ENCODE measurements at regions of chr6 and their contacts with region 1.

Region 1: GRCh38 chr6:117265410-117266256 is at the start of gene VGLL2:
- DNase-seq: no peak
- H3K4me3 Mint-ChIP-seq: peak within 1 kb of the TSS; percentile 46
- H3K27ac Mint-ChIP-seq: no peak within 1 kb of the TSS
- H3K4me1 Mint-ChIP-seq: no peaks in the 10 kb centered on the region
- H3K27me3 Mint-ChIP-seq: peaks cover 90% of the 10 kb centered on the region
- total RNA-seq, gene VGLL2: not detected in 2 replicates

Region 2: GRCh38 chr6:116881236-116881635 is 384.4 kb before region 1 on chr6:
- intact Hi-C with region 1: loop called (anchors 10 kb)
- DNase-seq: no peak
- H3K4me3 Mint-ChIP-seq: no peak overlapping the region
- H3K27ac Mint-ChIP-seq: no peak overlapping the region
- H3K4me1 Mint-ChIP-seq: peaks cover 4% of the 10 kb centered on the region
- H3K27me3 Mint-ChIP-seq: peaks cover 19% of the 10 kb centered on the region

Region 3: GRCh38 chr6:117280922-117281321 is 15.3 kb after region 1 on chr6:
- intact Hi-C with region 1: no loop called
- DNase-seq: no peak
- H3K4me3 Mint-ChIP-seq: no peak overlapping the region
- H3K27ac Mint-ChIP-seq: no peak overlapping the region
- H3K4me1 Mint-ChIP-seq: no peaks in the 10 kb centered on the region
- H3K27me3 Mint-ChIP-seq: peaks cover 5% of the 10 kb centered on the region

Region 4: GRCh38 chr6:117906853-117907599 is 641.4 kb after region 1 on chr6 and contains the start of gene SLC35F1:
- intact Hi-C with region 1: loop called (anchors 5 kb)
- DNase-seq: peak; percentile 9
- H3K4me3 Mint-ChIP-seq: peak within 1 kb of the TSS; percentile 58
- H3K27ac Mint-ChIP-seq: no peak within 1 kb of the TSS
- H3K4me1 Mint-ChIP-seq: peaks cover 9% of the 10 kb centered on the region
- H3K27me3 Mint-ChIP-seq: peaks cover 58% of the 10 kb centered on the region
- total RNA-seq, gene SLC35F1: 0.09 TPM in 1 of 2 replicates, not detected in the other

Measured in activated T-helper 2 cell treated with anti-CD3 and anti-CD28 coated beads, Interferon-gamma antibody, Interleukin-2, Interleukin-4, amounts not matched to agents 10 μg/mL and 5 μg/mL and 100 μg/mL, durations not matched to agents 14 hours and 24 hours and 36 hours (primary cell).